ENCODE measurements at regions of chr11 and their contacts with region 1.

Region 1: GRCh38 chr11:87421422-87421821 is 383.7 kb downstream of the TMEM135 start:
- DNase-seq: peak; percentile 55 to 83
- ATAC-seq: peak; percentile 92 to 98
- H3K4me3 ChIP-seq: no peak overlapping the region
- H3K27ac ChIP-seq: no peak overlapping the region
- H3K4me1 ChIP-seq: no peaks in the 10 kb centered on the region
- CTCF ChIP-seq: peak; percentile 74
- EP300 ChIP-seq: no peak
- POLR2A ChIP-seq: no peak
- RAD21 ChIP-seq: peak; percentile 67 to 73

Region 2: DNA sequence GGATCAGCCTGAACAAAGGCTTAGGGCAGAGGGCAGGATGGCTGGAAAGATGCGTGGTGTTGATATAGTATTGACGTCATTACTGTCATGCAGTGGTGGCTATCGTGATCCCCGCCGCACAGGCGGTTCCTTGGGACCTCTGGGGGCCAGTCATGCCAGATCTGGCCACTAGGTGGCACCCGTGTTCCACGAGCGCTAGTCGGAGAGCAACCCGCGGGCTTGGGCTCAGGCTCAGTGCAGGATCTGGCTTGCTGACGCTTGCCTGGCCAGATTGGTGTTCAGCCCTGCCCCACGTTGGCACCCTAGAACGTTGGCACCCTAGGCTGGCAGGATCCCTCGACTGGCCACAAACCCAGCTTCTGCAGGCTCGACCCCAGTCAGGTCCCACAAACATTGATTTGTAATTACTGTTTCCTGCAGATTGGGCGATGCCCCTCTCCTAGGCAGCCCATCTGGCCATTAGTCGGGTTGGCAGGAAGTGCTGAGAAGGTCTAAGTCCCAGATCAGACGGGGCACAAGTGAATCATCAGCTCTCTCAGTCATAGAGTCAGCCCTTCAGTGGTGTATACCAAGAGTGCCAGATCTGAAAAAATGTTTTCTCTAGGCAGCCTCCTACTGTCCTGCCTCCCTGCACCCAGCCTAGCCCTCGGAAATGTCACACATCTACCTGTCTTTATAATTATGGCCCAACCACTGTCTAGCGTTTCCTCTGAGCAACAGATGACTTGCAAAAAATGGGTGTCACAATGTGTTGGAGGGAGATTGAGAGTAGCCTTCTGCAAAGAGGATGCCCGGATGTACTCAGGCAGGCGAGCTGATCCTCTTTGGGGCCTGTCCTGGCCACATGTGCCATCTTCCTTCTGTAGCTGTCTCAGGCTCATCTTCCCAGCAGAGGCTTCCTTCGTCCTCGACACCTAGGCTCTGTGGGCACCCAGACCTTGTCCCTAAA is 68.4 kb before region 1 on chr11:
- CTCF ChIA-PET with region 1: interaction called, 97 read pairs
- POLR2A ChIA-PET with region 1: no interaction called
- DNase-seq: peak; percentile 74 to 79
- ATAC-seq: peak; percentile 94 to 99
- H3K4me3 ChIP-seq: no peak overlapping the region
- H3K27ac ChIP-seq: no peak overlapping the region
- H3K4me1 ChIP-seq: no peaks in the 10 kb centered on the region
- CTCF ChIP-seq: peak; percentile 96
- EP300 ChIP-seq: no peak
- POLR2A ChIP-seq: no peak
- RAD21 ChIP-seq: peak; percentile 93 to 96

Region 3: DNA sequence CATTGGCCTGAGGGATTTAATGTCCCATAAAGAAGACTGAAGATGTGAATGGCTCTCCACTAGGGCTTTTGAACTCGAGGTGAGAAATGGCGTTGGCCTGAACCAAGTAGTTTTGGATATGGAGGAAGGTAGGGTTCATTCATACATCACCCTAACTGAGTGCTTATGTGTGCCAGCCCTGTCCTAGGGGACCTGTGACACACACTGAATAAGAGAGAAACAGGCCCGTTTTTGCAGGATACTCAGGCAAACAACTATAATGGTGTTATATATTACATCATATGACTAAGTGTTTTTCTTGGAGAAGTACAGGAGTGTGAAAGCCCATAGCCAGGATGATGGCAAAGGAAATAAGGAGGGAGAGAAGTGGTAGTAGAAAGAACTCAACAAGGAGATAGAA is 15.6 kb before region 1 on chr11:
- CTCF ChIA-PET with region 1: interaction called, 12 read pairs
- POLR2A ChIA-PET with region 1: no interaction called
- DNase-seq: no peak
- ATAC-seq: no peak
- H3K4me3 ChIP-seq: no peak overlapping the region
- H3K27ac ChIP-seq: no peak overlapping the region
- H3K4me1 ChIP-seq: no peaks in the 10 kb centered on the region
- CTCF ChIP-seq: no peak
- EP300 ChIP-seq: no peak
- POLR2A ChIP-seq: no peak
- RAD21 ChIP-seq: no peak

Region 4: DNA sequence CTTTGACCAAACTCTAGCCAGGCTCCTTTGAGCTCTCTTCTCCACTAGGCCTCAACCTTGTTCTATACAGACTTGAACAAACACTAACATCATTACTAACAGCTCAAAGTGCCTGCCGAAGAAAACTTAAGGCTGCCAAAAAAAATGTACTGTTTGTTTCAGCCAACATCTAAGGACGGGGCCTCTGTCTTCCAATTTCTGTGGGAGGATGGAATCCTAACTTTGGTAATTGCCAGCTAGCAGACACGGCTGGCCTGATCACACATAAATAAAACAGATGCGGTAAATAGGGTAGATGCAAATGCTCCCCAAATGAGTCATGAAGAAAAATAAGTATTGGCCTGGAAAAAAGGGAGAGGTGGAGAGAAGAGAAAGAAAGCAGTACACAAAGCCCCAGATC is 10.6 kb after region 1 on chr11:
- CTCF ChIA-PET with region 1: interaction called, 20 read pairs
- POLR2A ChIA-PET with region 1: no interaction called
- DNase-seq: no peak
- ATAC-seq: no peak
- H3K4me3 ChIP-seq: no peak overlapping the region
- H3K27ac ChIP-seq: no peak overlapping the region
- H3K4me1 ChIP-seq: no peaks in the 10 kb centered on the region
- CTCF ChIP-seq: no peak
- EP300 ChIP-seq: no peak
- POLR2A ChIP-seq: no peak
- RAD21 ChIP-seq: no peak

Region 5: GRCh38 chr11:87437844-87438223 is 16.4 kb after region 1 on chr11:
- CTCF ChIA-PET with region 1: interaction called, 20 read pairs
- POLR2A ChIA-PET with region 1: no interaction called
- DNase-seq: no peak
- ATAC-seq: peak in 1 of 2 experiments; percentile 28; a peak in 2 of 6 replicates
- H3K4me3 ChIP-seq: no peak overlapping the region
- H3K27ac ChIP-seq: no peak overlapping the region
- H3K4me1 ChIP-seq: no peaks in the 10 kb centered on the region
- CTCF ChIP-seq: no peak
- EP300 ChIP-seq: no peak
- POLR2A ChIP-seq: no peak
- RAD21 ChIP-seq: no peak

Region 6: DNA sequence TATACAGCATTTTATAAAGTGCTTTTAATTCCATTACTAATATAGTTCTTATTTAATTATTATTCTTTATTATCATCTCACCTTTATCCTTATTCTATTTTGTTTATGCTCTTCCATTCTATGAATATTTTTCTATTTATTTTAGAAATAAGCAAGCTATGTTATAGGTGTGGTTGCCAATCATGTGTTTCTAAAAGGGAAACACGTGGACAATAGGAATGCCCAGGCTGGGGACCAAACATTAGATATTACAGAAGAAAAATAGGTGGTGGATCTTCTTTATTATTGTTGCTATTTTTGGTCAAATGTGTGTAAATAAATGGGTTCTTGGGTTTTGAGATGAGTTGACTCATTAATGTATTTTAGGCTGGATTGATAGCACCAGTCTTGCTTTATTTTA is 315.5 kb after region 1 on chr11:
- CTCF ChIA-PET with region 1: no interaction called
- POLR2A ChIA-PET with region 1: no interaction called
- DNase-seq: no peak
- ATAC-seq: no peak
- H3K4me3 ChIP-seq: no peak overlapping the region
- H3K27ac ChIP-seq: no peak overlapping the region
- H3K4me1 ChIP-seq: no peaks in the 10 kb centered on the region
- CTCF ChIP-seq: no peak
- EP300 ChIP-seq: no peak
- POLR2A ChIP-seq: no peak
- RAD21 ChIP-seq: no peak

Measured in A549 (cell line).